ENCODE measurements at regions of chr6 and their contacts with region 1.

Region 1: GRCh38 chr6:29834564-29835436 is 7.2 kb downstream of the HLA-G start:
- DNase-seq: peak in 1 of 5 donors; percentile 46
- ATAC-seq: peak in 2 of 4 donors; percentile 57 to 73
- H3K4me3 ChIP-seq: no peak overlapping the region
- H3K27ac ChIP-seq: no peak overlapping the region
- H3K4me1 ChIP-seq: peaks cover 0 to 4% (median 0%) of the 10 kb centered on the region in 12 donors
- H3K27me3 ChIP-seq: peaks cover under 1 to 76% (median 9%) of the 10 kb centered on the region in 9 donors
- CTCF ChIP-seq: peak; percentile 68 to 96 (median 88)
- POLR2A ChIP-seq: no peak

Region 2: DNA sequence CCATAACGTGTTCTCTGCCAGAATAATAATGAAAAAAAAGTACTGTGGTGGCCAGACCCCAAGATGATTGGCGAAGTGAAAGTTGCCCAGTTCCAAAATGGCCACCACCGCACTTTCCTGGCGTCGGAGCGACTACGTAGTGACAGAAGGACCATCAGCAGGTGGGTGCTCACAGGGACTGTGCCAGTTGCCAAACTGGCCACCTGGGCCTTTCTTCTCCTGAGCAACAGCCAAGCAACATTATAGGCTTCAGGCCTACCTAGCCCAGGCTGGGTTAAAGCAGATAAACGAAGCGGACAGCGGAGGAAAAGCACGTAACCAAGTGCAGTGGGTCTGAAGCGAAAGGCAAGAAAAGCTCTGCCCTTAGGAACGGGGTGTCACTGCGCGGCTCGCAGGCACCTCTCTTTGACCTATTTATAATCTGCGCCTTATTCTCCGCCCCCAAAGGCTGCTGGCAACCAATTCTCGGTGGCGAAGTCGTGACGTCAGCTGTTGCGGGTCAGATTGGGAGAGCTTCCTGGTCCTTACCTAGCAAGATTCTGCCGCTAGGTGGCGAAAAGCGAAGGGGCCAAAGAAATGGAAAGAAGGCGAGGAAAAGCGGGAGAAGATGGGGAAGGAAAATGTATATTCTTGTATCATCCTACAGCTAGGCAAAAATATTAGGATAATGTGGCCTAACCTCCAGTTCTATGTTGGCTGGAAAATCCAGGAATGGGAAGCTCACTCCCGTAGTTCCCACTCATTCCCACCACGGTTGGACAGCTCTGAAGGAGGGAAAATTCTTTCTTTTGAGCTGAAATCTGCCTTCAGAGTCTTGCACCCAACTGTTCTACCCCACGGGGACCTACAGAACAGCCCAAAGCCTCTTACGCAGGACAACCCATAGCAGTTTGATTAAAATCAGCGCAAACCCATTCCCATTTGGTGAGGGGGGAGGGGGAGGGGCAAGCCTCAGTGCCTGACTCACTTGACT is 184.8 kb before region 1 on chr6:
- intact Hi-C with region 1: loop called in 1 of 10 experiments (anchors 10 kb)
- DNase-seq: peak; percentile 98 to 99 (median 98)
- ATAC-seq: peak; percentile 95 to 98 (median 97)
- H3K4me3 ChIP-seq: peak overlapping the region in 11 of 12 donors; percentile 44 to 82 (median 68)
- H3K27ac ChIP-seq: peak overlapping the region; percentile 92 to 98 (median 96)
- H3K4me1 ChIP-seq: peaks cover 0 to 15% (median 5%) of the 10 kb centered on the region in 12 donors
- H3K27me3 ChIP-seq: peaks cover 0 to 2% (median 0%) of the 10 kb centered on the region in 9 donors
- CTCF ChIP-seq: peak; percentile 84 to 97 (median 94)
- POLR2A ChIP-seq: peak; percentile 35 to 89

Region 3: DNA sequence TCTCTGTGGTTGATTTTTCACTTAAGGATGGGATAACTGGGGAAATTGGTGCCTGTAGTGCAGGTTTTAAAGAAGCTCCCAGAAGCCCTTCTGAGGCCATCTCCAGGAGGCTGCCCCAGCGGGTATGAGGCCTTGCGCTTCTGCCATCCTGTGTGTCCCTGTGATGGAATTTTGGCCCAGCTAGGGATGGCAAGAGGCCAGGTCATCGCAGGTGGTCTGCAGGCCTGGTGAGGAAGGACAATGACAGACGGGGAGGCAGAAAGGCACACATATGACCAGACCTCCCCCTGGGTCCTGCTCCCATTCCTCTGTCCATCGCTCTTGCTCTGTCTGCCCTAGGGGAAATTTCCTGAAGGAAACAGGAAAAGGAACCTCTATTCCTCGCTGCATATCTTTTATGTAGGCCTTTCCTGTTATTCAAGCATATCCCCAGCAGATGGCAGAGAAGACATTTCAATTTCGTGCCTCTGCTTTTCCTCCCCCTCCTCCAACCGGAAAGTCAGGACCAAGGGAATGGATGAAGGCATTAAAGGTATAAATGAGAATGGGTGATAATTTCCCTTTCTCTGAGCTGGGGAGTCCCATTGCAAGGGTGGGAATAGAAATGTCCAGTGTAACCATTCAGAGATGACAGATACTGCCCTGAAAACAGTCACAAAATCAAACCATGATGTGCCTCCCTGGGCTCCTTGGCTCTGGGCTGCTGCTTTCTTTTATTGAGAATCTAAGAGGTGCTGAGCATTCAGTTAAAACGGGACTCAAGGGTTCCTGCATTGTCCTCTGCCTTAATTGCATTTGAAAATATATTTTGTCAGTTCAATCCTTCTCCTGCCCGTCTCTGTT is 129.2 kb before region 1 on chr6:
- intact Hi-C with region 1: loop called (anchors 1 to 2 kb)
- DNase-seq: peak in 1 of 5 donors; percentile 34
- ATAC-seq: peak in 3 of 4 donors; percentile 64 to 70 (median 67)
- H3K4me3 ChIP-seq: no peak overlapping the region
- H3K27ac ChIP-seq: no peak overlapping the region
- H3K4me1 ChIP-seq: peaks cover 0 to 20% (median 0%) of the 10 kb centered on the region in 12 donors
- H3K27me3 ChIP-seq: peaks cover 0 to 25% (median 2%) of the 10 kb centered on the region in 9 donors
- CTCF ChIP-seq: peak in 11 of 12 donors; percentile 38 to 74 (median 65)
- POLR2A ChIP-seq: no peak

Region 4: GRCh38 chr6:29737707-29738630 is 96.8 kb before region 1 on chr6:
- intact Hi-C with region 1: loop called in 8 of 10 experiments (anchors 1 to 10 kb)
- DNase-seq: peak in 4 of 5 donors; percentile 63 to 73 (median 68)
- ATAC-seq: peak; percentile 68 to 89 (median 88)
- H3K4me3 ChIP-seq: no peak overlapping the region
- H3K27ac ChIP-seq: peak overlapping the region in 1 of 12 donors; percentile 5
- H3K4me1 ChIP-seq: peaks cover 0 to 19% (median 5%) of the 10 kb centered on the region in 12 donors
- H3K27me3 ChIP-seq: no peaks in the 10 kb centered on the region
- CTCF ChIP-seq: peak; percentile 43 to 83 (median 70)
- POLR2A ChIP-seq: no peak

Region 5: GRCh38 chr6:29759457-29759856 is 75.3 kb before region 1 on chr6:
- intact Hi-C with region 1: loop called in 2 of 10 experiments (anchors 5 kb)
- DNase-seq: no peak
- ATAC-seq: no peak
- H3K4me3 ChIP-seq: no peak overlapping the region
- H3K27ac ChIP-seq: no peak overlapping the region
- H3K4me1 ChIP-seq: peaks cover 0 to 16% (median 0%) of the 10 kb centered on the region in 12 donors
- H3K27me3 ChIP-seq: no peaks in the 10 kb centered on the region
- CTCF ChIP-seq: no peak
- POLR2A ChIP-seq: no peak

Region 6: DNA sequence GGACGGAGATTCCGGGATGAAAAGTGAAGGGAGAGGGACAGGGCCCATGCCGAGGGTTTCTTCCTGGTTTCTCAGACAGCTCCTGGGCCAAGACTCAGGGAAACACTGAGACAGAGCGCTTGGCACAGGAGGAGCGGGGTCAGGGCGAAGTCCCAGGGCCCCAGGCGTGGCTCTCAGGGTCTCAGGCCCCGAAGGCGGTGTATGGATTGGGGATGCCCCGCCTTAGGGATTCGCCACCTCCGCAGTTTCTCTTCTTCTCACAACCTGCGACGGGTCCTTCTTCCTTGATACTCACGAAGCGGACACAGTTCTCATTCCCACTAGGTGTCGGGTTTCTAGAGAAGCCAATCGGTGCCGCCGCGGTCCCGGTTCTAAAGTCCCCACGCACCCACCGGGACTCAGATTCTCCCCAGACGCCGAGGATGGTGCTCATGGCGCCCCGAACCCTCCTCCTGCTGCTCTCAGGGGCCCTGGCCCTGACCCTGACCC is 52.6 kb after region 1 on chr6:
- intact Hi-C with region 1: no loop called
- DNase-seq: peak in 4 of 5 donors; percentile 30 to 51 (median 38)
- ATAC-seq: peak; percentile 13 to 60 (median 56)
- H3K4me3 ChIP-seq: peak overlapping the region in 11 of 12 donors; percentile 50 to 93 (median 70)
- H3K27ac ChIP-seq: peak overlapping the region in 11 of 12 donors; percentile 49 to 96 (median 87)
- H3K4me1 ChIP-seq: peaks cover 0 to 17% (median 0%) of the 10 kb centered on the region in 12 donors
- H3K27me3 ChIP-seq: no peaks in the 10 kb centered on the region
- CTCF ChIP-seq: peak in 1 of 12 donors; percentile 15
- POLR2A ChIP-seq: no peak

Measured in heart left ventricle (tissue), 16 donors.